ENCODE measurements at regions of chr16 and their contacts with region 1.

Region 1: GRCh38 chr16:30417529-30418349 is 10.3 kb downstream of the ZNF771 start:
- DNase-seq: peak; percentile 95
- ATAC-seq: peak; percentile 87
- H3K4me3 ChIP-seq: peak overlapping the region; percentile 33 to 75 (median 66)
- H3K4me3 Mint-ChIP-seq: peak overlapping the region; percentile 77
- H3K27ac ChIP-seq: peak overlapping the region; percentile 47 to 73
- H3K27ac Mint-ChIP-seq: peak overlapping the region; percentile 72
- H3K4me1 ChIP-seq: peaks cover 5 to 12% of the 10 kb centered on the region in 2 donors
- H3K4me1 Mint-ChIP-seq: peaks cover 7% of the 10 kb centered on the region
- H3K27me3 ChIP-seq: no peaks in the 10 kb centered on the region
- H3K27me3 Mint-ChIP-seq: no peaks in the 10 kb centered on the region
- CTCF ChIP-seq: peak; percentile 17

Region 2: DNA sequence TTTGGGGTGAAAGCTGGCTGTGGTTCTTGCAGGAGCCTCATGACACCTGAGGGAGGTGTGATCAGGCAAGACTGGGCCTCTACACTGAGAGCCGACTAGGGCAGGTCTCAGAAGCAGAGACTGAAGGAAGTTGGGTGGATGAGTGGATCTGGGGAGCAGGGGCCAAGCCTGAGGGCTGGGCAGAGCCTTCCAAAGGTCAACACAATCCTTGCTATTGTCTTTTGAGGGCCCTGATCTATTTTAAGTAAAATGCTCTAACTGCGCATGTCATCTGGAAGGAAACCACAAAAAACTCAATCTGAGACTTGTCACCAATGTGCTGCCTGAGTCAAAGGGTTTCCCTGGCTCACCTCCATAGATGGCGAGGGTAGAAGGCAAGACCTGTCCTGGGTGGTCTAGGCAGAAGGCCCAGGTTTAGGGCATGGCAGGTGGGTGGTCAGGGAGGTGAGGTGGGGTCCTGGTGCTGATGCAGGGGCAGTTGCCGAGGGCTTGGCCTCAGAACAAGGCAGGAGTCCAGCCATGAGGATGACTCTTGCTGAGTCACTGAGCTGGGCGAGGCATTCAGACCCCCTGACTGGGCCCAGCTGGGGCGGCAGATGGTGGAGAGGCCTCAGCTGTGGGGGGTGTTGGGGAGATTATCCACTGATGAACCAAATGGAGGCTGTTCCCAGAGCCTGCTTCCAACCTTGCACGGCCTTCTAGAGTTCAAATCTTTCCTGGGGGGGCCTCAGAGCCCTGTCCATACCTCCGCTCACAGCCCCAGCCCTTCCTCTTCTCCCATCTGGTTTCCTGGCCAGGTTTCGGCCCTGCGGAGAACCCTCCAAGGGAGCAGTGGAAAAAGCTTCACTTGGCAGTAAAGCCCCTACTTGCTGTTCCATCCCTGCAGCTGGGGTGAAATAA is 592.3 kb before region 1 on chr16:
- CTCF ChIA-PET with region 1: no interaction called
- POLR2A ChIA-PET with region 1: interaction called, 10 read pairs
- intact Hi-C with region 1: no loop called
- DNase-seq: no peak
- ATAC-seq: no peak
- H3K4me3 ChIP-seq: no peak overlapping the region
- H3K4me3 Mint-ChIP-seq: no peak overlapping the region
- H3K27ac ChIP-seq: no peak overlapping the region
- H3K27ac Mint-ChIP-seq: peak overlapping the region; percentile 50
- H3K4me1 ChIP-seq: peaks cover 23 to 24% of the 10 kb centered on the region in 2 donors
- H3K4me1 Mint-ChIP-seq: peaks cover 31% of the 10 kb centered on the region
- H3K27me3 ChIP-seq: no peaks in the 10 kb centered on the region
- H3K27me3 Mint-ChIP-seq: no peaks in the 10 kb centered on the region
- CTCF ChIP-seq: no peak

Region 3: GRCh38 chr16:30361180-30361579 is 56.6 kb before region 1 on chr16:
- CTCF ChIA-PET with region 1: no interaction called
- POLR2A ChIA-PET with region 1: no interaction called
- intact Hi-C with region 1: no loop called
- DNase-seq: no peak
- ATAC-seq: no peak
- H3K4me3 ChIP-seq: no peak overlapping the region
- H3K4me3 Mint-ChIP-seq: no peak overlapping the region
- H3K27ac ChIP-seq: no peak overlapping the region
- H3K27ac Mint-ChIP-seq: no peak overlapping the region
- H3K4me1 ChIP-seq: peaks cover under 1 to 3% of the 10 kb centered on the region in 2 donors
- H3K4me1 Mint-ChIP-seq: peaks cover 4% of the 10 kb centered on the region
- H3K27me3 ChIP-seq: no peaks in the 10 kb centered on the region
- H3K27me3 Mint-ChIP-seq: no peaks in the 10 kb centered on the region
- CTCF ChIP-seq: no peak

Region 4: GRCh38 chr16:30395155-30395991 is 22.4 kb before region 1 on chr16 and contains the start of gene ZNF48:
- CTCF ChIA-PET with region 1: interaction called, 9 read pairs
- POLR2A ChIA-PET with region 1: interaction called, 7 read pairs
- intact Hi-C with region 1: loop called (anchors 1 kb)
- DNase-seq: peak; percentile 87
- ATAC-seq: peak; percentile 95
- H3K4me3 ChIP-seq: peak within 1 kb of the TSS; percentile 32 to 75 (median 66)
- H3K4me3 Mint-ChIP-seq: peak within 1 kb of the TSS; percentile 92
- H3K27ac ChIP-seq: peak within 1 kb of the TSS in 1 of 2 donors; percentile 64
- H3K27ac Mint-ChIP-seq: peak within 1 kb of the TSS; percentile 91
- H3K4me1 ChIP-seq: peaks cover 13 to 31% of the 10 kb centered on the region in 2 donors
- H3K4me1 Mint-ChIP-seq: peaks cover 23% of the 10 kb centered on the region
- H3K27me3 ChIP-seq: no peaks in the 10 kb centered on the region
- H3K27me3 Mint-ChIP-seq: no peaks in the 10 kb centered on the region
- CTCF ChIP-seq: peak; percentile 26
- total RNA-seq, gene ZNF48: 13.3 and 14.2 TPM in 2 replicates

Region 5: GRCh38 chr16:30407102-30407803 is 10.5 kb before region 1 on chr16 and contains the start of gene ZNF771:
- CTCF ChIA-PET with region 1: interaction called, 38 read pairs
- POLR2A ChIA-PET with region 1: interaction called, 11 read pairs
- intact Hi-C with region 1: no loop called
- DNase-seq: peak; percentile 94
- ATAC-seq: peak; percentile 91
- H3K4me3 ChIP-seq: peak within 1 kb of the TSS; percentile 42 to 76 (median 66)
- H3K4me3 Mint-ChIP-seq: peak within 1 kb of the TSS; percentile 98
- H3K27ac ChIP-seq: peak within 1 kb of the TSS; percentile 42 to 57
- H3K27ac Mint-ChIP-seq: peak within 1 kb of the TSS; percentile 96
- H3K4me1 ChIP-seq: peaks cover 15 to 23% of the 10 kb centered on the region in 2 donors
- H3K4me1 Mint-ChIP-seq: peaks cover 21% of the 10 kb centered on the region
- H3K27me3 ChIP-seq: no peaks in the 10 kb centered on the region
- H3K27me3 Mint-ChIP-seq: peaks cover 3% of the 10 kb centered on the region
- CTCF ChIP-seq: no peak
- total RNA-seq, gene ZNF771: 6.6 and 8.3 TPM in 2 replicates

Region 6: GRCh38 chr16:30534368-30535105 is 116.8 kb after region 1 on chr16 and contains the start of gene ZNF747:
- CTCF ChIA-PET with region 1: interaction called, 11 read pairs
- POLR2A ChIA-PET with region 1: interaction called, 7 read pairs
- intact Hi-C with region 1: loop called (anchors 5 kb)
- DNase-seq: peak; percentile 93
- ATAC-seq: peak; percentile 82
- H3K4me3 ChIP-seq: peak within 1 kb of the TSS; percentile 80 to 93 (median 88)
- H3K4me3 Mint-ChIP-seq: peak within 1 kb of the TSS; percentile 98
- H3K27ac ChIP-seq: peak within 1 kb of the TSS; percentile 89 to 94
- H3K27ac Mint-ChIP-seq: peak within 1 kb of the TSS; percentile 94
- H3K4me1 ChIP-seq: peaks cover 8 to 23% of the 10 kb centered on the region in 2 donors
- H3K4me1 Mint-ChIP-seq: peaks cover 33% of the 10 kb centered on the region
- H3K27me3 ChIP-seq: no peaks in the 10 kb centered on the region
- H3K27me3 Mint-ChIP-seq: no peaks in the 10 kb centered on the region
- CTCF ChIP-seq: no peak
- total RNA-seq, gene ZNF747: 17.3 and 27.1 TPM in 2 replicates

Region 7: DNA sequence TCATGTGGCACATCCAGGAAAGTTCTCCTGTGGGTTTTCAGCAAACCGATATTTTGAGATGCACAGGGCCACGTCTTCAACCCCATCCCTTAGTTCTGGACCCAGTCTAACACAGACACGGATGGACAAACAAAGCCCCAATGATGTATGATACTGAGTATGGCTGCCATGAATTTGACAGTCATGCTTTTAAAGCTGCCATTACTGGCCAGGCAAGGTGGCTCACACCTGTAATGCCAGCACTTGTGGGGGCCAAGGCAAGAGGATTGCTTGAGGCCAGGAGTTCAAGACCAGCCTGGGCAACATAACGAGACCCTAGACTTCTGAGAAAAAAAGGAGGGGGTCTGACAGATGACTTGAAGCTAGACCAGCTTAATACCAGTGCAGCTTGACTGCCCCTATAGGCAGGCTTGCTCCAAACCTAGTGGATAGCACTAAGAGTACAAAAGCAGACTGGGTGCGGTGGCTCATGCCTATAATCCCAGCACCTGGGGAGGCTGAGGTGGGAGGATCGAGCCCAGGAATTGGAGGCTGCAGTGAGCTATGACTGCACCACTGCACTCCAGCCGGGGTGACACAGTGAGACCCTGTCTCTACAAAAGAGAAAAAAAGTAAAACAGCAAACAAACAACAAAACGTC is 380.1 kb after region 1 on chr16:
- CTCF ChIA-PET with region 1: no interaction called
- POLR2A ChIA-PET with region 1: no interaction called
- intact Hi-C with region 1: no loop called
- DNase-seq: no peak
- ATAC-seq: no peak
- H3K4me3 ChIP-seq: no peak overlapping the region
- H3K4me3 Mint-ChIP-seq: no peak overlapping the region
- H3K27ac ChIP-seq: no peak overlapping the region
- H3K27ac Mint-ChIP-seq: no peak overlapping the region
- H3K4me1 ChIP-seq: no peaks in the 10 kb centered on the region
- H3K4me1 Mint-ChIP-seq: no peaks in the 10 kb centered on the region
- H3K27me3 ChIP-seq: no peaks in the 10 kb centered on the region
- H3K27me3 Mint-ChIP-seq: no peaks in the 10 kb centered on the region
- CTCF ChIP-seq: no peak

Region 8: GRCh38 chr16:30893744-30894539 is 476.2 kb after region 1 on chr16 and contains the start of gene BCL7C:
- CTCF ChIA-PET with region 1: no interaction called
- POLR2A ChIA-PET with region 1: interaction called, 11 read pairs
- intact Hi-C with region 1: no loop called
- DNase-seq: peak; percentile 85
- ATAC-seq: peak; percentile 80
- H3K4me3 ChIP-seq: peak within 1 kb of the TSS; percentile 11 to 72 (median 65)
- H3K4me3 Mint-ChIP-seq: peak within 1 kb of the TSS; percentile 91
- H3K27ac ChIP-seq: peak within 1 kb of the TSS; percentile 63 to 79
- H3K27ac Mint-ChIP-seq: peak within 1 kb of the TSS; percentile 93
- H3K4me1 ChIP-seq: peaks cover 32 to 43% of the 10 kb centered on the region in 2 donors
- H3K4me1 Mint-ChIP-seq: peaks cover 48% of the 10 kb centered on the region
- H3K27me3 ChIP-seq: no peaks in the 10 kb centered on the region
- H3K27me3 Mint-ChIP-seq: no peaks in the 10 kb centered on the region
- CTCF ChIP-seq: no peak
- total RNA-seq, gene BCL7C: 30.5 and 31.6 TPM in 2 replicates